ENCODE measurements at regions of chr1 and their contacts with region 1.

Region 1: DNA sequence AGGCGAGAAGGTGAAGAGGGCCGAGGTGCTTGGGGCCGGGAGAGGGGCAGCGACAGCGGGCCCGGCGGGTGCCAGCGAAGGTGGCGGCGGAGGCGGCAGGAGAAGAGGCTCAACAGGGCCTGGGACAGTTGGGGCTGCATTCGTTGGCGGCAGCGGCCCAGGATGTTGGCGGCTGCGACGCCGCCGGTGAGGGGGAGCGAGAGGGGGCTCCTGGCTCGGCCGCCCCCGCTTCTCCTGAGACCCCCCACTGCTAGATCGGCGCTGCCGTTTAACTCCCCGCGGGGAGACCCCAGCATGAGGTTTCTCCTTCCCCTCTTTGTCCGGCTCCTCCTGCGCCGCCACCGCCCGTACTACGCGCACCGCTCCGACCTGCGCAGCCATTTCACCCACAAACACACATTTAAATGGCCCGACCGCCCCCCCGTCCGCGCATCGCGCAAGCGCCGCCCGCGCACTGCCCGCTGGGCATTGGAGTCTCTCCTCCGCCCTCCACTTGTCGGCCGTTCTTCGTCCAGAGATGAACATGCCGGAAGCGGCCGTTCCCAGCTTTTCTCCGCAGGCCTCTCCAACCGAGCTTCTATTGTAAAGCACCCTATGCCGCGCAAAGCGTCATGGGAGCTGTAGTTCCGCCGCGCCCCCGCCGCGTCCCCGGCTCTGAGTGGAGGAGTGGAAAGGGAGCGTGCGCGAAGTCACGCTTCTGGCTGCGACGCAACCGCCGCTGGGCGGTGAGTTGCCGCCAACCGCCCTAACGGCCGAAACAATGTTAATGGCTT is at the start of gene RSBN1:
- DNase-seq: peak; percentile 96 to 100 (median 97)
- ATAC-seq: peak; percentile 91
- H3K4me3 ChIP-seq: peak within 1 kb of the TSS; percentile 89
- H3K4me3 Mint-ChIP-seq: peak within 1 kb of the TSS; percentile 97
- H3K27ac ChIP-seq: peak within 1 kb of the TSS; percentile 89 to 96
- H3K27ac Mint-ChIP-seq: peak within 1 kb of the TSS; percentile 96
- H3K4me1 ChIP-seq: peaks cover 15% of the 10 kb centered on the region
- H3K4me1 Mint-ChIP-seq: peaks cover 47% of the 10 kb centered on the region
- H3K27me3 ChIP-seq: no peaks in the 10 kb centered on the region
- H3K27me3 Mint-ChIP-seq: no peaks in the 10 kb centered on the region
- CTCF ChIP-seq: peak; percentile 15
- total RNA-seq, gene RSBN1: 44.2 to 44.6 TPM

Region 2: GRCh38 chr1:113140588-113141446 is 671.3 kb before region 1 on chr1:
- CTCF ChIA-PET with region 1: no interaction called
- POLR2A ChIA-PET with region 1: no interaction called
- intact Hi-C with region 1: loop called in 1 of 2 experiments (anchors 1 kb)
- DNase-seq: peak; percentile 20 to 75 (median 45)
- ATAC-seq: peak; percentile 76
- H3K4me3 ChIP-seq: no peak overlapping the region
- H3K4me3 Mint-ChIP-seq: peak overlapping the region; percentile 63
- H3K27ac ChIP-seq: no peak overlapping the region
- H3K27ac Mint-ChIP-seq: peak overlapping the region; percentile 25
- H3K4me1 ChIP-seq: peaks cover 7% of the 10 kb centered on the region
- H3K4me1 Mint-ChIP-seq: peaks cover 34% of the 10 kb centered on the region
- H3K27me3 ChIP-seq: no peaks in the 10 kb centered on the region
- H3K27me3 Mint-ChIP-seq: no peaks in the 10 kb centered on the region
- CTCF ChIP-seq: peak; percentile 83

Region 3: GRCh38 chr1:113675332-113675731 is 136.7 kb before region 1 on chr1:
- CTCF ChIA-PET with region 1: no interaction called
- POLR2A ChIA-PET with region 1: no interaction called
- intact Hi-C with region 1: no loop called
- DNase-seq: no peak
- ATAC-seq: no peak
- H3K4me3 ChIP-seq: no peak overlapping the region
- H3K4me3 Mint-ChIP-seq: no peak overlapping the region
- H3K27ac ChIP-seq: no peak overlapping the region
- H3K27ac Mint-ChIP-seq: no peak overlapping the region
- H3K4me1 ChIP-seq: no peaks in the 10 kb centered on the region
- H3K4me1 Mint-ChIP-seq: no peaks in the 10 kb centered on the region
- H3K27me3 ChIP-seq: no peaks in the 10 kb centered on the region
- H3K27me3 Mint-ChIP-seq: no peaks in the 10 kb centered on the region
- CTCF ChIP-seq: no peak

Region 4: GRCh38 chr1:113783254-113784099 is 28.6 kb before region 1 on chr1:
- CTCF ChIA-PET with region 1: interaction called, 4 read pairs
- POLR2A ChIA-PET with region 1: interaction called, 59 read pairs
- intact Hi-C with region 1: loop called in 1 of 2 experiments (anchors 1 kb)
- DNase-seq: peak in 10 of 14 experiments; percentile 15 to 90 (median 44)
- ATAC-seq: peak; percentile 92
- H3K4me3 ChIP-seq: peak overlapping the region; percentile 11
- H3K4me3 Mint-ChIP-seq: peak overlapping the region; percentile 49
- H3K27ac ChIP-seq: peak overlapping the region; percentile 67 to 80
- H3K27ac Mint-ChIP-seq: no peak overlapping the region
- H3K4me1 ChIP-seq: peaks cover 37% of the 10 kb centered on the region
- H3K4me1 Mint-ChIP-seq: peaks cover 30% of the 10 kb centered on the region
- H3K27me3 ChIP-seq: no peaks in the 10 kb centered on the region
- H3K27me3 Mint-ChIP-seq: no peaks in the 10 kb centered on the region
- CTCF ChIP-seq: no peak

Region 5: GRCh38 chr1:113904674-113905434 is 92.8 kb after region 1 on chr1 and contains the starts of genes AP4B1 and DCLRE1B:
- CTCF ChIA-PET with region 1: interaction called, 4 read pairs
- POLR2A ChIA-PET with region 1: interaction called, 38 read pairs
- intact Hi-C with region 1: loop called in 1 of 2 experiments (anchors 2 kb)
- DNase-seq: peak; percentile 89 to 100 (median 94)
- ATAC-seq: peak; percentile 92
- H3K4me3 ChIP-seq: peak within 1 kb of the TSS; percentile 96
- H3K4me3 Mint-ChIP-seq: peak within 1 kb of the TSS; percentile 99
- H3K27ac ChIP-seq: peak within 1 kb of the TSS; percentile 86 to 89
- H3K27ac Mint-ChIP-seq: peak within 1 kb of the TSS; percentile 98
- H3K4me1 ChIP-seq: peaks cover 46% of the 10 kb centered on the region
- H3K4me1 Mint-ChIP-seq: peaks cover 52% of the 10 kb centered on the region
- H3K27me3 ChIP-seq: no peaks in the 10 kb centered on the region
- H3K27me3 Mint-ChIP-seq: no peaks in the 10 kb centered on the region
- CTCF ChIP-seq: peak; percentile 73
- total RNA-seq, gene AP4B1: 44.1 to 48.0 TPM
- total RNA-seq, gene DCLRE1B: 6.4 to 6.8 TPM

Region 6: GRCh38 chr1:114581335-114582287 is 769.5 kb after region 1 on chr1 and contains the start of gene BCAS2:
- CTCF ChIA-PET with region 1: no interaction called
- POLR2A ChIA-PET with region 1: interaction called, 5 read pairs
- intact Hi-C with region 1: loop called in 1 of 2 experiments (anchors 10 kb)
- DNase-seq: peak; percentile 88 to 99 (median 92)
- ATAC-seq: peak; percentile 92
- H3K4me3 ChIP-seq: peak within 1 kb of the TSS; percentile 86
- H3K4me3 Mint-ChIP-seq: peak within 1 kb of the TSS; percentile 95
- H3K27ac ChIP-seq: peak within 1 kb of the TSS; percentile 82 to 97
- H3K27ac Mint-ChIP-seq: peak within 1 kb of the TSS; percentile 97
- H3K4me1 ChIP-seq: peaks cover 26% of the 10 kb centered on the region
- H3K4me1 Mint-ChIP-seq: peaks cover 48% of the 10 kb centered on the region
- H3K27me3 ChIP-seq: no peaks in the 10 kb centered on the region
- H3K27me3 Mint-ChIP-seq: no peaks in the 10 kb centered on the region
- CTCF ChIP-seq: no peak
- total RNA-seq, gene BCAS2: 109 to 111 TPM